Ovary (tissue), 10 donors: ENCODE measurements at regions of chr18 and their contacts with region 1.

Region 1: GRCh38 chr18:46429649-46430224 is 227.3 kb downstream of the LOXHD1 start:
- DNase-seq: no peak
- H3K4me3 ChIP-seq: no peak overlapping the region
- H3K27ac ChIP-seq: no peak overlapping the region
- H3K4me1 ChIP-seq: no peaks in the 10 kb centered on the region
- H3K27me3 ChIP-seq: no peaks in the 10 kb centered on the region
- CTCF ChIP-seq: no peak
- EP300 ChIP-seq: no peak
- POLR2A ChIP-seq: no peak

Region 2: GRCh38 chr18:46173393-46174341 is 256.1 kb before region 1 on chr18:
- intact Hi-C with region 1: no loop called
- DNase-seq: peak; percentile 86 to 93 (median 89)
- H3K4me3 ChIP-seq: peak overlapping the region; percentile 93
- H3K27ac ChIP-seq: peak overlapping the region; percentile 23 to 70
- H3K4me1 ChIP-seq: peaks cover 4% of the 10 kb centered on the region
- H3K27me3 ChIP-seq: no peaks in the 10 kb centered on the region
- CTCF ChIP-seq: peak; percentile 57 to 77 (median 62)
- EP300 ChIP-seq: no peak
- POLR2A ChIP-seq: peak; percentile 23

Region 3: DNA sequence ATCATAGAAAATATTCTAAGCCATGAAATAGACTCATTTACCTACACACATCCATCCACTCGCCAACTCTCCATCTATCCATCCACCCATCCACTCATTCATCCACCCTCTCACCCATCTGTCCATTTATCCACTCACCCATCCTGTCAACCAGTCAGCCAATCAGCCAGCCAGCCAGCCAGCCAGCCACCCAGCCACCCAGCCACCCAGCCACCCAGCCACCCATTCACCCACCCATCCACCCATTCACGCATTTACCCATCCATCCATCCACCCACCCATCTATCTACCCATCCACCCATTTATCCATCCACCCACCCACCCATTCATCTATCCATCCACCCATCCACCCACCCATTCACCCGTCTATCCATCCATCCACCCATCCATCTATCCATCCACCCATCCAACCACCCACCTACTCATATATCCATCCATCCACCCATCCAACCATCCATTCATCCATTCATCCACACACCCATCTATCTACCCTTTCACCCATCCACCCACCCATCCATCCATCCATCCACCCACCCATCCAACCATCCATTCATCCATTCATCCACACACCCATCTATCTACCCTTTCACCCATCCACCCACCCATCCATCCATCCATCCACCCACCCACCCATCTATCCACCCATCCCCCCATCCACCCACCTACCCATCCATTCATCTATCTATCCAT is 42.2 kb after region 1 on chr18:
- intact Hi-C with region 1: loop called in 1 of 4 experiments (anchors 1 kb)
- DNase-seq: no peak
- H3K4me3 ChIP-seq: no peak overlapping the region
- H3K27ac ChIP-seq: no peak overlapping the region
- H3K4me1 ChIP-seq: no peaks in the 10 kb centered on the region
- H3K27me3 ChIP-seq: no peaks in the 10 kb centered on the region
- CTCF ChIP-seq: no peak
- EP300 ChIP-seq: no peak
- POLR2A ChIP-seq: no peak

Region 4: GRCh38 chr18:46484971-46485370 is 55.2 kb after region 1 on chr18:
- intact Hi-C with region 1: no loop called
- DNase-seq: no peak
- H3K4me3 ChIP-seq: no peak overlapping the region
- H3K27ac ChIP-seq: no peak overlapping the region
- H3K4me1 ChIP-seq: no peaks in the 10 kb centered on the region
- H3K27me3 ChIP-seq: no peaks in the 10 kb centered on the region
- CTCF ChIP-seq: no peak
- EP300 ChIP-seq: no peak
- POLR2A ChIP-seq: no peak